Activated CD4-positive, alpha-beta T cell treated with anti-CD3 and anti-CD28 coated beads, Interleukin-2, amount 10 ng/mL, durations not matched to agents 24 days and 14 days (primary cell): ENCODE measurements at regions of chr5 and their contacts with region 1.

Region 1: DNA sequence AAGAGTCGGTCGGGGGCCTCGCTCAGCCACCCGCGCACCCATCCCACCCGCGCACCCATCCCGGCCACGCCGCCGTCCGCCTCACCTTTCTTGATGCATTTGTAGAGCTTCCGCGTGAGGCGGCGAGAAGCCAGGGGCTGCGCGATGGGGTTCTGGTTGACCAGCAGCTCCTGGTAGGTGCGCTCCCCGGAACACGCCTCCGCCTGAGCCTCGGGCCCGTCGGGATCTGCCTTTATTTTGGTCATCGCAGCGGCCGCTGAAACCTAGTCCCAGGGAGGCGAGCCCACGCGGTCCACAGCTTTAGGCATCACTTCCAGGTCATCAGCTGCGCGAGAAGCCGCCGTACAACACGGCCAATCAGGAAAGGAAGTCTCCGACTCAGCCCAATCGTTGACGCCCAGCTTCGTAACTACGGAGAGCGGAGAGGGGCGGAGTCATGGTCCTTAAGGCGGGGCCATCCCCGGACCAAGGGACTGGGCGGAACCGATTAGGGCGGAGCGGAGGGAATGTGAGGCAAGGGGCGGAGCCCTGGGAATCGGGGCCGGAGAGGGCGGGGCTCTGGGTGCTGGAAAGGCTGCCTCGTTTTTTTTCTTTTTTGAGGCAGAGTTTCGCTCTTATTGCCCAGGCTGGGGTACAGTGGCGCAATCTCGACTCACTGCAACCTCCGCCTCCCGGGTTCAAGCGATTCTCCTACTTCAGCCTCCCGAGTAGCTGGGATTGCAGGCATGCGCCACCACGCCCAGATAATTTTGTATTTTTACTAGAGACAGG is at the start of gene NHP2:
- DNase-seq: peak; percentile 100
- H3K4me3 Mint-ChIP-seq: peak within 1 kb of the TSS; percentile 97
- H3K27ac Mint-ChIP-seq: peak within 1 kb of the TSS; percentile 91
- H3K4me1 Mint-ChIP-seq: peaks cover 43% of the 10 kb centered on the region
- H3K27me3 Mint-ChIP-seq: no peaks in the 10 kb centered on the region
- total RNA-seq, gene NHP2: 267 and 273 TPM in 2 replicates

Region 2: GRCh38 chr5:178113199-178113787 is 40.5 kb before region 1 on chr5 and contains the start of gene N4BP3:
- intact Hi-C with region 1: loop called (anchors 1 kb)
- DNase-seq: peak; percentile 95
- H3K4me3 Mint-ChIP-seq: peak within 1 kb of the TSS; percentile 93
- H3K27ac Mint-ChIP-seq: peak within 1 kb of the TSS; percentile 89
- H3K4me1 Mint-ChIP-seq: peaks cover 33% of the 10 kb centered on the region
- H3K27me3 Mint-ChIP-seq: peaks cover 34% of the 10 kb centered on the region
- total RNA-seq, gene N4BP3: 3.2 and 3.3 TPM in 2 replicates

Region 3: GRCh38 chr5:178130604-178131485 is 22.9 kb before region 1 on chr5 and contains the start of gene RMND5B:
- intact Hi-C with region 1: loop called (anchors 2 kb)
- DNase-seq: peak; percentile 95
- H3K4me3 Mint-ChIP-seq: peak within 1 kb of the TSS; percentile 82
- H3K27ac Mint-ChIP-seq: peak within 1 kb of the TSS; percentile 83
- H3K4me1 Mint-ChIP-seq: peaks cover 14% of the 10 kb centered on the region
- H3K27me3 Mint-ChIP-seq: no peaks in the 10 kb centered on the region
- total RNA-seq, gene RMND5B: 29.3 and 29.5 TPM in 2 replicates

Region 4: DNA sequence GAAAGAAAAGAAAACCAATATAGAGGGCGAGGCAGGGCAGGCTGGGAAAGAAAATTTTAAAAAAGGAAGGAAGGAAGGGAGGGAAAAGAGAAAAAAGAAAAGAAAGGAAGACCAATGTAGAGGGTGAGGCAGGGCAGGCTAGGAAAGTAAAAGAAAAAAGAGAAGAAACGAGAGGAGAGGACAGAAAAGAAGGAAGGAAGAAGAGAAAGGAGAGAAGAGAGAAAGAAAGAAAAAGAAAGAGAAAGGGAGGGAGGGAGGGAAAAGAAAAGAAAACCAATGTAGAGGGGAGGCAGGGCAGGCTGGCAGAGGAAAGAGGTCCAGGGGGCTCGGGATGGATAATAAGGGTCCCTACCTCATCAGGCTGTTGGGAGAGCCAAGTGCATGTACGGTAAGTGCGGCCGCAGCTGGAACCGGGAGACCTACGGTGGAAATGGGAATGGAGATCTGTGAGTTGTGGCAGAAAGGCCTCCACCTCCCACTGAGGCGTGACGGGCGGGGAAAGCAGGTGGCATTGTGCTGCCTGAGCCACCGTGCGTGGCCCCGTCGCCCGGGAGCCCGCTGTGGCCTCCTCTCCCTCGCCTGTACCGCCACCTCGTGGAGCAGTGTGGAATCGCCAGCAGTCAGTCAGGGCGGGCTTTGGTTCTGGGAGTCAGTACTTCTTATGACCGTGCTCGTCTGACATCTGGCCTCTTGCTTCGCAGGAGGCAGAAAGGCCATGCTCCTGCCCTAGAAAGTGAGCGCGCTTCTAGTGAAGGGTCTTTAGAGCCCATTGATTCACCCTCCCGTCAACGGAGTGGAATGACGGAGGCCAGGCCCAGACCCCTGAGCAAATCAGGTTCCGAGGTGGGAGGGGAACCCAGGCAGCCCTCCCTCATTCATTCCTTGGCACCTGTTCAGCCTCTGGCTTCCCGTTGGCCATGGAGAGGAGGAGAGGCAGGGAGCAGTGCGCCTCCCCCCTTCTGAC is 10.3 kb after region 1 on chr5:
- intact Hi-C with region 1: loop called (anchors 1 kb)
- DNase-seq: peak; percentile 98
- H3K4me3 Mint-ChIP-seq: peak overlapping the region; percentile 54
- H3K27ac Mint-ChIP-seq: no peak overlapping the region
- H3K4me1 Mint-ChIP-seq: peaks cover 5% of the 10 kb centered on the region
- H3K27me3 Mint-ChIP-seq: peaks cover 22% of the 10 kb centered on the region

Region 5: DNA sequence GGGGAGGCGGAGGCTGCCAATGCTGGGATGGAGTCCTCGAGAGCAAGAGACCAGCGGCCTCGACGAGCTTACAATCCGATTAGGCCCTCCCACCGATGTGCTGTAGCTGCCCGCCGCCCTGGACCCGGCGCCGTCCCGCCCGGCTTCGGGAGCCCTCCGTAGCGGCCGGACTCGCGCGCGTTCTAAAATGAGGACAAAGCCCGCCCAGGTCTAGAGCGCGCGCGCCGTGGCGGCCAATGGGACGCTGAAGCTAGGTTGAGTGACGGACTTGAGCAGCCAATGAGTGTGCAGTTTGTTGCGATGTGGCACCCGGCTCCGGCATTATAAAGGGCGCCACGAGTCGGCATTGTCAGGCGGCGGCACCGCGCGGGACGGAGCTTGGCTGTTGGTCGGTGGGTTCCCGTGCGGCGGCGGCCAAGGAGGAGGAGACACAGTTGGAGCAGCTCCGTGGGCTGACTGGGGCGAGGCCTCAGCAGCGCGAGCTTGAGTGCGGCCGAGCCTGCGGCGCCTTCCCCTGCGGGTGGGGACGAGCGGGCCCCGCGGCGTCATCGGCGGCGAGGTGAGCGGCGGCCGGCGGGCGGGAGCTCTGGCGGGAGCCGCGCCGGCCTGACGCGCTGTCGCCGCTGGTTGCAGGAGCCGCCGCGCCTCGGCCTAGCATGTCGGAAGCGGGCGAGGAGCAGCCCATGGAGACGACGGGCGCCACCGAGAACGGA is 50.6 kb after region 1 on chr5 and contains the start of gene HNRNPAB:
- intact Hi-C with region 1: loop called (anchors 1 kb)
- DNase-seq: peak; percentile 99
- H3K4me3 Mint-ChIP-seq: peak within 1 kb of the TSS; percentile 98
- H3K27ac Mint-ChIP-seq: peak within 1 kb of the TSS; percentile 99
- H3K4me1 Mint-ChIP-seq: peaks cover 26% of the 10 kb centered on the region
- H3K27me3 Mint-ChIP-seq: peaks cover 2% of the 10 kb centered on the region
- total RNA-seq, gene HNRNPAB: 492 and 507 TPM in 2 replicates

Region 6: GRCh38 chr5:178215263-178216002 is 61.7 kb after region 1 on chr5:
- intact Hi-C with region 1: no loop called
- DNase-seq: no peak
- H3K4me3 Mint-ChIP-seq: no peak overlapping the region
- H3K27ac Mint-ChIP-seq: no peak overlapping the region
- H3K4me1 Mint-ChIP-seq: peaks cover 9% of the 10 kb centered on the region
- H3K27me3 Mint-ChIP-seq: no peaks in the 10 kb centered on the region